ENCODE measurements at regions of chr19 and their contacts with region 1.

Region 1: GRCh38 chr19:996051-996838 is 4.0 kb upstream of the GRIN3B start:
- DNase-seq: peak; percentile 78 to 96 (median 84)
- H3K4me3 ChIP-seq: peak overlapping the region in 1 of 2 donors; percentile 38
- H3K4me3 Mint-ChIP-seq: peak overlapping the region; percentile 55 to 88 (median 74)
- H3K27ac ChIP-seq: peak overlapping the region; percentile 37
- H3K27ac Mint-ChIP-seq: peak overlapping the region; percentile 81 to 99 (median 88)
- H3K4me1 ChIP-seq: peaks cover 21% of the 10 kb centered on the region
- H3K4me1 Mint-ChIP-seq: peaks cover 4 to 26% (median 14%) of the 10 kb centered on the region in 4 donors
- H3K27me3 ChIP-seq: peaks cover 23% of the 10 kb centered on the region
- H3K27me3 Mint-ChIP-seq: peaks cover 16 to 22% of the 10 kb centered on the region in 2 donors

Region 2: DNA sequence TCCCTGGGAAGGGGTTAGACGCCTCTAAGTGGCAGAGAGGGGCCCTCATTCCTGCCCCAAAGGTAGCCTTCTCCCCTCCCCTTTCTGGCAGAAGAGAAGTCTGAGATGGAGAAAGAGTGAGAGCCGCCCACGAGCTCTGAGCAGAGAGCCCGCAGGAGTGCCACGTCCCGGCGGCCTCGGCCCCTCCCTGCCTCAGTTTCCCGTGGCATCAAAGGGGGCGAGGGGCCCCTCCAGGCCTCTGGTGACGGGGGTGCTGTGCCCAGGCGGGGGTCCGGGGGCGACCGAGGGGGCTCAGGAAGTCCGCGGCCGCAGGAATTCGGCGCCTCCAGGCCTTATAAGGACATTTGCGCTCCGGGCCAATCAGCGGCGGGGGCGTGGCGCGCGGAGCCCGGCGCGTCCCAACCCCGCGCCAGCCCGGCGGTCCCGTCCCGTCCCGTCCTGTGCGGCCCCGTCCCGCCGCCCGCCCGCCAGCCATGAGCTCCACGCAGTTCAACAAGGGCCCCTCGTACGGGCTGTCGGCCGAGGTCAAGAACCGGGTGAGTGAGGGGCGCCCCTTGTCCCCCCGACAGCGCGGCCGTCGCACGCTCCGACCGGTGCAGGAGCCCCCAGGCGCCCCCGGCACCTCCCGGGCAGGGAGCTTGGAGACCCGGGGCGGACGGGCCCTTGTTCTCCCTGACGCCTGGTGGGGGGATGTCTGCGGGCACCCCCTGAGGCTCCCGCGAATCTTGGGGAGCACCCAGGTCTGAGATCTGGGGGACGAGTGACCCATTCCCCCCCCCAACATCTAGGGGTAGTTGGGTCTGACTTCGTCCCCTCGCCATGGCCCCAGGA is 30.2 kb after region 1 on chr19 and contains the start of gene CNN2:
- CTCF ChIA-PET with region 1: no interaction called
- POLR2A ChIA-PET with region 1: interaction called, 14 read pairs
- intact Hi-C with region 1: loop called (anchors 2 kb)
- DNase-seq: peak in 4 of 5 donors; percentile 46 to 68 (median 60)
- H3K4me3 ChIP-seq: peak within 1 kb of the TSS; percentile 91 to 97
- H3K4me3 Mint-ChIP-seq: peak within 1 kb of the TSS; percentile 97 to 99 (median 98)
- H3K27ac ChIP-seq: peak within 1 kb of the TSS; percentile 83
- H3K27ac Mint-ChIP-seq: peak within 1 kb of the TSS; percentile 93 to 98 (median 95)
- H3K4me1 ChIP-seq: peaks cover 38% of the 10 kb centered on the region
- H3K4me1 Mint-ChIP-seq: peaks cover 11 to 38% (median 23%) of the 10 kb centered on the region in 4 donors
- H3K27me3 ChIP-seq: no peaks in the 10 kb centered on the region
- H3K27me3 Mint-ChIP-seq: peaks cover 0 to 2% of the 10 kb centered on the region in 2 donors
- total RNA-seq, gene CNN2: 263 to 266 TPM

Region 3: GRCh38 chr19:1177322-1178114 is 181.3 kb after region 1 on chr19:
- CTCF ChIA-PET with region 1: no interaction called
- POLR2A ChIA-PET with region 1: no interaction called
- intact Hi-C with region 1: no loop called
- DNase-seq: no peak
- H3K4me3 ChIP-seq: no peak overlapping the region
- H3K4me3 Mint-ChIP-seq: no peak overlapping the region
- H3K27ac ChIP-seq: no peak overlapping the region
- H3K27ac Mint-ChIP-seq: peak overlapping the region in 1 of 7 donors; percentile 22
- H3K4me1 ChIP-seq: peaks cover 24% of the 10 kb centered on the region
- H3K4me1 Mint-ChIP-seq: peaks cover 8 to 23% (median 14%) of the 10 kb centered on the region in 4 donors
- H3K27me3 ChIP-seq: no peaks in the 10 kb centered on the region
- H3K27me3 Mint-ChIP-seq: no peaks in the 10 kb centered on the region